ENCODE measurements at regions of chr6 and their contacts with region 1.

Region 1: DNA sequence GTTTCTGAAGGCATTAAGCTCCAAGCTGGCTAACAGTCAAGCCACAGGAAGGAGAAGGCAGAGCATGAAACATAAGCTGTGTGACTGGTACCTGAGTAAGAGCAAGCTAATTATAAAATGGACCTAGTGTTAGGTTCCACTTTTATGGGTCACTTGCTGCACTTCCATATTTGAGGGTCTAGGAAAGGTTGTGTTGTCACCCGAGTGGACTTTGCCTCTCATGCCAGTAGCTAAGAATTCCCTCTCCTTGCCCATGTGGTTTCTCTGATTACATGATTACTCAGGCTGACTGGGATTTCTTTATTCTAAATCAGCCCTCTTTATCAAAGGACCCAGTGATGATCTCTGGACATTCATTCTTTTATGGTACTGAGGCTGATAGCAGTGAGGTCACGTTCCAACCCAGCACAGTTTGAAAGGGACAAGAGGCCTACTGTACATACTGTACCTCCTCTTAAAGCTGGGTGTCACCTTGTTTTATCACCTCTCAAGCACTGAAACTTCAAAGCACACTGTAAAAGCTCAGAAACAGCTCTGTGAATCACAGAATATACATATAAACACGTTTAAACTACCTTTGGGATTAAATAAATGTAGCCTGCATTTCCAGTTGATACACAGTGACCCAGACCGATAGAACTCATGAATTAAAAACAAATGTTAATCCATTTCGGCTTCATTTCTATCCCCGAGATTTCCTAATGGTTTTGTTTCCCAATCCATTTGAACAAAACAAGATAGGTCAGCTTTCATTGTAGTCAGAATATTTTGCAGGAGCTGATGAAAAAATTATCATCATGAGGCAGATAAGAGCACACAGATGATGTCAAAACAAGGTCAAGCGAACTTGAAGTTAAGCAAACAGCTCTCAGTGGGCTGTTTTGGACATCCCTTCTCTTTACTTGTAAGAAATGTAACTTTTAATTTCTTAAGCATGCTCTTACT is 96.5 kb downstream of the ALDH8A1 start:
- DNase-seq: peak; percentile 79
- ATAC-seq: peak; percentile 87
- H3K4me3 ChIP-seq: no peak overlapping the region
- H3K27ac ChIP-seq: peak overlapping the region; percentile 84; the same call in 1 of the 2 replicates
- H3K4me1 ChIP-seq: peaks cover 19% of the 10 kb centered on the region
- H3K27me3 ChIP-seq: no peaks in the 10 kb centered on the region
- CTCF ChIP-seq: no peak
- POLR2A ChIP-seq: no peak
- RAD21 ChIP-seq: no peak

Region 2: GRCh38 chr6:134822920-134823709 is 30.3 kb before region 1 on chr6:
- CTCF ChIA-PET with region 1: no interaction called
- POLR2A ChIA-PET with region 1: no interaction called
- dilution Hi-C with region 1: no loop called
- in situ Hi-C with region 1: no loop called
- intact Hi-C with region 1: no loop called
- DNase-seq: peak; percentile 90
- ATAC-seq: peak; percentile 95
- H3K4me3 ChIP-seq: no peak overlapping the region
- H3K27ac ChIP-seq: peak overlapping the region; percentile 77
- H3K4me1 ChIP-seq: peaks cover 11% of the 10 kb centered on the region
- H3K27me3 ChIP-seq: no peaks in the 10 kb centered on the region
- CTCF ChIP-seq: peak; percentile 99
- POLR2A ChIP-seq: no peak; the same call in 1 of the 2 replicates
- RAD21 ChIP-seq: peak; percentile 100

Region 3: GRCh38 chr6:134868812-134869211 is 15.4 kb after region 1 on chr6:
- CTCF ChIA-PET with region 1: no interaction called
- POLR2A ChIA-PET with region 1: no interaction called
- dilution Hi-C with region 1: no loop called
- in situ Hi-C with region 1: no loop called
- intact Hi-C with region 1: loop called (anchors 2 kb)
- DNase-seq: no peak
- ATAC-seq: no peak
- H3K4me3 ChIP-seq: no peak overlapping the region
- H3K27ac ChIP-seq: no peak overlapping the region
- H3K4me1 ChIP-seq: no peaks in the 10 kb centered on the region
- H3K27me3 ChIP-seq: no peaks in the 10 kb centered on the region; the same call in 1 of the 2 replicates
- CTCF ChIP-seq: no peak
- POLR2A ChIP-seq: no peak
- RAD21 ChIP-seq: no peak